Right ventricle myocardium inferior (tissue), 1 donor: ENCODE measurements at regions of chr16 and their contacts with region 1.

Region 1: GRCh38 chr16:30922960-30923535 is 324 bp upstream of the FBXL19 start:
- DNase-seq: peak; percentile 100
- ATAC-seq: peak; percentile 86

Region 2: DNA sequence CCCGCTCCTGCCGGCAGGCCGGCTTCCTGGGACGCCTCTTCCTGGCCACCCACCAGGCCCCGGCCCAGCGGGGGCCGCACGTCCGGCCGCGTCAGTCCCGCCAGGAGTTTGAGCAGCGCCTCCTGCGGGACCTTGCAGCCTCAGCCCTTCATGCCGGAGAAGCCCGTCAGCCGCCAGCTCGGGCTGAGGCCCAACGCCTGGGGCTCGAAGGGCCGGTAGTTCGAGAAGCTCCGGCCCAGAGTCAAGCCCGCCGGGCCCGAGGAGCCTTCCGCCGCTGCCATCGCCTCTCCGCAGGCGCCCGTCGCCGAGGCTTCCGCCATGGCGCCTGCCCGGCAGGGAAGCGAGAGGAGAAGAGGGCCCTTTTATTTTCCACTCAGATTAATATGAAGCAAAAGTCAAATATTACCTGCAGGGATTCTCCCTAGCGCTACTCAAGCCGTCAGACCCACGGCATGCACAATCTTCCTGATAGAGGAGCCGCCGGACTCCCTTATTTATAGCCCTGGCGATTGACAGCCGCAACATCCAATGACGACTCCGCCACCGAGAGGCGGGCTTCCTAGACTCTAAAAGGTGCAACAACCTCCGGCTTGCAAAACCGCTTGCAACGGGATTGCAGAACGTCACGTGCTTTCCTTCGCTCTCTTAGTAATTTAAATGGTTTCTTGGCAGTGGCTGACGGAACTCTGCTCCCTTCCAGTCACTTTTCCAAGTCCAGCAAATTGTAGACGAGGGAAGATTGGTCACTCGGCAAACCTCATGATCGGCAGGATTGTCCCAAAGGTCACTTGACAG is 477.4 kb before region 1 on chr16 and contains the start of gene SEPHS2:
- intact Hi-C with region 1: loop called (anchors 10 kb)
- DNase-seq: peak; percentile 99
- ATAC-seq: peak; percentile 98
- total RNA-seq, gene SEPHS2: 29.3 TPM

Region 3: GRCh38 chr16:30698139-30698815 is 224.8 kb before region 1 on chr16:
- intact Hi-C with region 1: loop called (anchors 1 kb)
- DNase-seq: peak; percentile 96
- ATAC-seq: peak; percentile 91

Region 4: GRCh38 chr16:30844671-30845449 is 78.2 kb before region 1 on chr16:
- intact Hi-C with region 1: loop called (anchors 1 kb)
- DNase-seq: no peak
- ATAC-seq: peak; percentile 89

Region 5: GRCh38 chr16:30858829-30859423 is 64.1 kb before region 1 on chr16:
- intact Hi-C with region 1: no loop called
- DNase-seq: no peak
- ATAC-seq: no peak

Region 6: DNA sequence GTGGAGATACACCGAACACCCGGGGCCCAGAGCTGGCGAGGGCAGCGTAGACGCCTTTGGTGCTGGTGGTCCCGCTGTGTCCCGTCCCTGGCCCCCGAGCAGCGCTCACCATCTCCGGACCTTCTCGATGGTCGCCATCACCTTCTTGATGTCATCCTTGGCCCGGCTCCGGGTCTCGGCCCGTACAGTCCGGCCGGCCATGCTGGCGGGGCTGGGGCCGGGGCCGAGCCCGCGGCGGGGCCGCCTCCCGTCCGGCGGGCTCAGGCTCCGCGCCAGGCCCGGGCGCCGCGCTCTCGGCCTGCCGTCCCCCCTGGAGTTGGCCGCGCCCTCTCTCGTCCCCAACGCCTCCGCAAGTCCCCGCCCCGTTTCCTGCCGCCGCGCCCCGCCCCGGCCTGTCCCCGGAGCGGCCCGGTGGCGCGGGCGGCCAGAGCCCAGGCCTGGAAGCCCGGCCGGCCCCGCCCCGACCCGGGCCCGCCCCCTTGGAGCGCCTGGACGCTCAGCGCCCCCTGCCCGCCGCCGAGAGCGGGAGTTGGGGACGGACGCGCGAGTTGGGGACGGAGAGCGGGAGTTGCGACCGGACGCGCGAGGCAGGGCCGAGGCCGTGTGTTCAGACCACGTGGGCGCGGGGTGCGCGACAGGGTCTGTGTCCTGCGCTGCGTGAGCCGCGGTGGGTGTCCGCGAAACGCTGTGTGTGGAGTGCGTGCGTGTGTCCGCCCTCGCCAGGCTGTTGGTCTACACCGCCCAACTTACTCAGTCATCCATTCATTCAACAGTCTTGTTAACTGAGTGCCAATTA is 29.1 kb before region 1 on chr16 and contains the start of gene BCL7C:
- intact Hi-C with region 1: loop called (anchors 2 kb)
- DNase-seq: peak; percentile 97
- ATAC-seq: peak; percentile 88
- total RNA-seq, gene BCL7C: 32.2 TPM

Region 7: DNA sequence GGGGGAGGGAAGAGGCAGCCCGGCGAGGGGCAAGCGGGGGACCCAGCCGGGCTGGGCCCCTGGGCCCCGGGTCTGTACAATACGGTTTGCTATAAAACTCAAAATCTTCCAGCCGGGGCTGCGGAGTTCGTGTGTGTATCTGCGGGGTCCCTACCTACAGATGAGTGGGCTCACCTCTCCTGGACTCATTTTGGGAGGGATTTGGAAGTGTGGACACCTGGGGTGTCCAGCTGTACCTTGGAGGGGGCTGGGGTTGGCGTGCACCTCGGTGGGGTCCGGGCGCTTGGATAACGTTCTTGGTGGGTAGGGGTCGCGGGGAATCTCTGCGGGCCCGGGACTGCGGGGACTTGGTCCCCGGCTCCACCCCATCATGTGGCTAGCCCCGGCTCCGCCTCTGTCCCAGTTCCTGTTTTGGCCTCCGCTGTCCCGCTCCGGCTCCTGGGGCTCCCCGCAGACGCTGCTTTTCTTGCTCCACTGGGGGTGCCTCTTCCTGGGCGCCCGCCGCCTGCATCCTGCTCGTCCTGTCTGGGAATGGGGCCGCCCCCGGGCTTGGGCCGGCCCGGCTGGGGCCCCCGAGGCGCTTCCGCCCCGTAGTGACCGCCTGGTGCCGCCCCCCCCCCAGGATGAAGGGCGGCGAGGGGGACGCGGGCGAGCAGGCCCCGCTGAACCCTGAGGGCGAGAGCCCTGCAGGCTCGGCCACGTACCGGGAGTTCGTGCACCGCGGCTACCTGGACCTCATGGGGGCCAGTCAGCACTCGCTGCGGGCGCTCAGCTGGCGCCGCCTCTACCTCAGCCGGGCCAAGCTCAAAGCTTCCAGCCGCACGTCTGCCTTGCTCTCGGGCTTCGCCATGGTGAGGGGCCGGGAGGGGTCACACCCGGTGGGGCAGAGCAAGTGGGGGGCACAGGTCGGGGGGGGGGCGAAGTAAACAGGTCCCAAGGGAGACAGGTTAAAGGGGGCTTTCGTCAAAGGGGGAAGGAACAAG is 25.9 kb after region 1 on chr16 and contains the start of gene ORAI3:
- intact Hi-C with region 1: loop called (anchors 2 kb)
- DNase-seq: peak; percentile 92
- ATAC-seq: peak; percentile 76
- total RNA-seq, gene ORAI3: 11.4 TPM